GM10248 (cell line): ENCODE measurements at regions of chr3 and their contacts with region 1.

Region 1: DNA sequence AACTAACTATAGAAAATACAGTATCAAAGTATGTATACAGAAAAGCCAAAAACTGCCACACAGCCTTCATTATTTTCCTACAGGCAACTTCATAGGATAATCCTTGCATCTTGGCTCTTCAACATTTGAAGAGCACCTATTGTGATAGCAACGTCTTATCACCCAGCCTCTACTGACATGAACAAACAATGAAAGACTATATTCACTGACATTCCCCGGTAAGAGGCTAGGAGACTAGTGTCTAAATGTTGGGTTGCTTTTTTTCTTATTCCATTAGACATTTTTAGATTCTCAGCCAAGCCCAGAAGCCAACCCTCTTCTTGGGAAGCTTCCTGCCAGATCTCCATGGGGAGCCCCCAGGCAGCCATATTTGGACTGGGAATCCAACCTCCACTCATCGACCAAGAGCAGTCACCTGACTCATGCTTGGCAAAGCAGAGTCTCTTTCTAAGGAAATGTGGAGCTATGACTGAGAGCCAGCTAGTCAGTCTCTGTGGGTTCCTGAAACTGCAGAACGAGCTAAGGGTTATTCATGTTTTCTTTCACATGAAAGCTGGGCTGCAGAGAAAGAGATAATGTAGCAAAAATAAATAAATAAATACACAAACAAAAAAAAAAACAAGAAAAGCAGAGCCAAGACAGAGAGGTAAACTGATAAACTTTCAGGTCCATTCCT is 227.5 kb downstream of the MAGI1 start:
- DNase-seq: no peak
- CTCF ChIP-seq: no peak

Region 2: GRCh38 chr3:65234499-65234898 is 576.7 kb before region 1 on chr3:
- CTCF ChIA-PET with region 1: no interaction called
- POLR2A ChIA-PET with region 1: no interaction called
- DNase-seq: no peak
- CTCF ChIP-seq: no peak

Region 3: DNA sequence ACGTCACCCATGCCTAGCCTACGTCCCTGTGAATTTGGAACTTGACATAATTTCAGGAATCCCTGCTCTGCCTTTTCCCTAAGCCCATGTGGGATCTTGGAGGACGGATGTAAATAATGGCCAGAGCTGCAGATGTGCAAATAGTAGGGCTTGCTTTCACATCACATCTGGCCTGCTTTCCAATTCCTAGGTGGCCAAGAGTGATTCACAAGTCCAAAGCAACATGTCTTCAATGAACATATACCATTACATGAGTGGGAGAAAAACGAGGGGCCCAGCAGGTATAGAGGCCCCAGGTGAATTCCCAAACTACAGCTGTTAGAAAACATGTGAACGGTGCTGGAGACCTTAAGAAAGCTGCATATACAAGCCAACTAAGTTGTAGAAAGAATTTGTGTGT is 12.9 kb after region 1 on chr3:
- CTCF ChIA-PET with region 1: interaction called, 17 read pairs
- POLR2A ChIA-PET with region 1: no interaction called
- DNase-seq: no peak
- CTCF ChIP-seq: no peak